ENCODE measurements at regions of chr12 and their contacts with region 1.

Region 1: DNA sequence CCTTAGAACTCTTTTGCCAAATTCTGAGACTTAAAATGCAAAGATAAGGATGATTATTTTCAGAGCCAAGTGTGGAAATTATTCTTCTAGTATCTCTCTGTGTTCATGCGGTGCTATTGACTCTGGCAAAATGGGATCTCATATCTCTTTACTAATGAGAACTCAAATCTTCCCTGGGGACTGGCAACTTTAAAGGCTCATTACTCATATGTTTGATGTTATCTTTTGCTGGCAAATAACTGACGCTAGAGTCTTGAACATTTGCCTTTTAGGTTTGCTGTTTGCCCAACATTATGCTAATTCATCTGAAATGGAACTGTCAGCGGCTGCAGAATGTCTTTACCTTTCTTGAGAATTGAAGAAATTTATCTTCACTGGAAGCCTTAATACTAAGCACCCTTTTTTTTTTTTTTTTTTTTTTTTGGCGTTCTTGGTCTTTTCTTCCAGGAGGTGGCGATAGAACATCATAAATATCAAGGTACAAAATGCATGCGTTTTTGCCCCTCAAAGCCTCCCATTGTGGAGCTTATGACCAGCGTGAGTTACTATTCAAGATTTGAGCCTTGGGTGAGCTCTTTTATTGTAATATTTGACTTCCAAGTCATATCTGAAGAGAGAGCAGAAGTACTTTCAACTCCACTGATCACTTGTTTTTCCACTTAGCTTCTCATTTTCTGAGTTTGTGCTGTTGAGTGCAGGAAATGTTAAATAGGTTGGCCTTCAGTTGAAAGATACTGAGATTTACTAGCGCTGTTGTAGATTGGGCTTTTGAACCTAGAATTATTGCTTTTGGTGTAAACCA is 86.6 kb downstream of the CAND1 start:
- DNase-seq: peak; percentile 16
- ATAC-seq: peak; percentile 76
- H3K4me3 ChIP-seq: no peak overlapping the region
- H3K27ac ChIP-seq: no peak overlapping the region
- H3K4me1 ChIP-seq: no peaks in the 10 kb centered on the region
- H3K27me3 ChIP-seq: no peaks in the 10 kb centered on the region
- CTCF ChIP-seq: peak; percentile 42 to 58 (median 53); a peak in 5 of 6 replicates
- EP300 ChIP-seq: no peak
- POLR2A ChIP-seq: no peak
- RAD21 ChIP-seq: peak; percentile 78

Region 2: GRCh38 chr12:67344979-67345710 is 10.6 kb before region 1 on chr12:
- CTCF ChIA-PET with region 1: interaction called, 13 read pairs
- POLR2A ChIA-PET with region 1: no interaction called
- RAD21 ChIA-PET with region 1: interaction called, 7 read pairs
- SMC1A ChIA-PET with region 1: interaction called, 4 read pairs
- in situ Hi-C with region 1: no loop called
- intact Hi-C with region 1: no loop called
- DNase-seq: no peak
- ATAC-seq: no peak
- H3K4me3 ChIP-seq: no peak overlapping the region
- H3K27ac ChIP-seq: no peak overlapping the region
- H3K4me1 ChIP-seq: no peaks in the 10 kb centered on the region
- H3K27me3 ChIP-seq: no peaks in the 10 kb centered on the region
- CTCF ChIP-seq: no peak
- EP300 ChIP-seq: no peak
- POLR2A ChIP-seq: no peak
- RAD21 ChIP-seq: no peak

Region 3: DNA sequence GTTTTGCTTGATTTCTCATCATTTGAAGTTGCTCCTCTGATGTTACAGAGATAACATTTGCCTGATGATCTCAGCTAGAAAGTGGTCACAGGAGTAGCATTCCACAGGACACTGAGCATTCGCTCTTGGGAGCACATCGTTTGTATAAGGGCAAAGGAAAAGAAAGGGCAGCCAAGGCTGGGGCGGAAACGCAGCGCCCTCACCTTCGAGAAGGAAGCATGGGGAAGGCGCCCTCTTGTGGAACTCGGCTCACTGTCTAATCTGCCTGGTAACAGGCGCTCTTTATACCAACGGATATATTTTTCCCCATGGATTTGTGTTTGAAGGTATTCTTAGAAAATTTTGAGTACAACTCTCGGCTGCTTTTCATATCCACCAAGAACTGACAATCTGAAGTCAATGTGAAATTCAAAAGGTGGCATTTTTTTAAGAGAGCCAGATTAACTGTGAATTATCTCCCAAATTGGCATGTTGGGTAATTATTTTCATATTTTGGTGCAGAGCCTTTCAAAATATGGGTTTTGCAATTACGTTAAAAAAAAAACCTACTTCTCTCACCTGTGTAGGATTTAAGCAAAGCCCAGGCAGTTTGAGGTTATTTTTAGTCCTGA is 86.1 kb after region 1 on chr12:
- CTCF ChIA-PET with region 1: interaction called, 46 read pairs
- POLR2A ChIA-PET with region 1: no interaction called
- RAD21 ChIA-PET with region 1: interaction called, 9 read pairs
- SMC1A ChIA-PET with region 1: interaction called, 21 read pairs
- in situ Hi-C with region 1: no loop called
- intact Hi-C with region 1: loop called (anchors 2 kb)
- DNase-seq: no peak
- ATAC-seq: peak; percentile 98
- H3K4me3 ChIP-seq: no peak overlapping the region
- H3K27ac ChIP-seq: no peak overlapping the region
- H3K4me1 ChIP-seq: peaks cover 8% of the 10 kb centered on the region; the same call in 1 of the 2 replicates
- H3K27me3 ChIP-seq: no peaks in the 10 kb centered on the region; a peak in 1 of 4 replicates
- CTCF ChIP-seq: peak; percentile 68 to 82 (median 76)
- EP300 ChIP-seq: no peak
- POLR2A ChIP-seq: no peak
- RAD21 ChIP-seq: peak; percentile 77

Region 4: DNA sequence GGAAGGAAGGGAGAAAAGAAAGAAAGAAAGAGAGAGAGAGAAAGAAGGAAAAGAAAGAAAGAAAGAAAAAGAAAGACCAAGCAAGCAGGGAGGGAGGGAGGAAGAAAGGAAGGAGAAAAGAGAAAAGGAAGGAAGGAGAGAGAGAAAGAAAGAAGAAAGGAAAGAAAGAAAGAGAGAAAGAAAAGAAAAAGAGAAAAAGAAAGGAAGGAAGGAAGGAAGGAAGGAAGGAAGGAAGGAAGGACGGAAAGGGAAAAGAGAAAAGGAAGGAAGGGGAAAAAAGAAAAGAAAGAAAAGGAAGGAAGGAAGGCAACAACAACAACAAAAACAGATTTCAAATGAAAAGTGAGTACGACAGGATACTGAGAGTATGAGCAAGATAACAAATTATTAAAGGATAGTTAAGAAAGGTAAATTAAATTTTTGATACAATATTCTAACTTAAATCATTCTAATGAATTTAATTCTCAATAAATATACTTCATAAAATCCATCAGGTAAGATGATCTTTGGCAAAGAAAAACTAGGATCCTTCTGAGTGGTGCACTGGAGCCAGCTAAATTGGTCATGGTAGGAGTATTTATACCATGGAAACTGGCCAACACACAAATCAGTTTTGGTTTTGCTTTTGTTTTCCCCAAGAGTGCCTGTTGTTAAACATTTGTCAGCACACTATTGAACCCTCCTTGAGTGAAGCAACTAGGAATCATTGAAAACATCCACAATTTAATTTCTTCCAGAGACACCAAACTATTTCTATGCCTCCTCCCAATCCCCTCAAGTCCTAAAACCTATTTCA is 236.6 kb after region 1 on chr12:
- CTCF ChIA-PET with region 1: no interaction called
- POLR2A ChIA-PET with region 1: no interaction called
- RAD21 ChIA-PET with region 1: no interaction called
- SMC1A ChIA-PET with region 1: no interaction called
- in situ Hi-C with region 1: no loop called
- intact Hi-C with region 1: no loop called
- DNase-seq: peak; percentile 45
- ATAC-seq: peak; percentile 91
- H3K4me3 ChIP-seq: peak overlapping the region; percentile 30; the same call in 1 of the 2 replicates
- H3K27ac ChIP-seq: no peak overlapping the region
- H3K4me1 ChIP-seq: no peaks in the 10 kb centered on the region
- H3K27me3 ChIP-seq: no peaks in the 10 kb centered on the region
- CTCF ChIP-seq: no peak
- EP300 ChIP-seq: no peak
- POLR2A ChIP-seq: no peak
- RAD21 ChIP-seq: no peak

Region 5: GRCh38 chr12:67648521-67649260 is 292.9 kb after region 1 on chr12 and contains the start of gene DYRK2:
- CTCF ChIA-PET with region 1: no interaction called
- POLR2A ChIA-PET with region 1: no interaction called
- RAD21 ChIA-PET with region 1: no interaction called
- SMC1A ChIA-PET with region 1: no interaction called
- in situ Hi-C with region 1: no loop called
- intact Hi-C with region 1: loop called (anchors 10 kb)
- DNase-seq: no peak
- ATAC-seq: peak; percentile 56
- H3K4me3 ChIP-seq: peak within 1 kb of the TSS; percentile 100
- H3K27ac ChIP-seq: peak within 1 kb of the TSS; percentile 70
- H3K4me1 ChIP-seq: peaks cover 6% of the 10 kb centered on the region
- H3K27me3 ChIP-seq: no peaks in the 10 kb centered on the region
- CTCF ChIP-seq: 0 out of 6 replicates have a peak, but pooled peaks of 1 of the 3 experiments have one; percentile 3
- EP300 ChIP-seq: no peak
- POLR2A ChIP-seq: peak; percentile 94
- RAD21 ChIP-seq: no peak
- polyA plus RNA-seq, gene DYRK2: 3.1 to 3.2 TPM

Region 6: DNA sequence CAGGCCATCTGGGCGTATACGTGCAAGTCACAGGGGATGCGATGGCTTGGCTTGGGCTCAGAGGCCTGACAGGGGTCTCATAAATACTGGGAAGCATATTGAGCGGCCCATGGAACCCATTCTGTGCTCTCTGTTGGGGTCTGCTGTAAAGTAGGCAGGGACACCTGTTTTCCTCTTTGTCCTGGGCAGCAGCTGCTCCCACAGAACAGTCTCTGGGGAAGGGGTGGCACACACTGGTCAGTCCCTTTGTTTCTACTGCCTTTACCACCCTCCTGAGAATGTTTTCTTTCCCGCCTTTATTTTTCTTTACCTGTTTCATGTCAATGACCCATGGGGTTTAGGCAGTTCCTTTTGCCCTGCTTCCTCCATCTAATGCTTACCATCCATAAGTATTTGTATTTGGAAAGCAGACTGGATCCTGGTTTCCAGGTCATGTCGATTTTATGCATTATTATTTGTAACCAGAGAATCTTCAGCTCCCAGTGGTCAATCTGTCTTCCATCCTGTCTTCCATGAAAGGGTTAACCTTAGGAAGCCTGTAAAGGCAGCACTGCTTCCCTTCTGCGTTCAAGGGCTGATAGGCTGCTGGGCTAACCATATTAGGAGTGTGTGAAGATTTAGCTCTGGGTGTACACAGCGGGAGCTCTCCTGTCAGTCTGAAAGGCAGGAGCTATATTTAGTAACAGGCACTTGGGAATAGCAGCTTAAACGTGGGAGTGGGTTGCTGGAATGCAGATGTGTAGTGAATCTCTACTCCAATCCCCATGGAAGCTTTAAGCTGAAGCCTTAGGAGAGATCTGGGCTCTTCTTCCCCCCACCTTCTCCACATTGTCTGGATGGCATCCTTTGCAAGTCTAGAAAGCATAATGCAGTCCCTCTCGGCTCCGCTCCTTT is 416.7 kb after region 1 on chr12:
- CTCF ChIA-PET with region 1: no interaction called
- POLR2A ChIA-PET with region 1: no interaction called
- RAD21 ChIA-PET with region 1: no interaction called
- SMC1A ChIA-PET with region 1: no interaction called
- in situ Hi-C with region 1: no loop called
- intact Hi-C with region 1: no loop called
- DNase-seq: no peak
- ATAC-seq: no peak
- H3K4me3 ChIP-seq: no peak overlapping the region
- H3K27ac ChIP-seq: no peak overlapping the region
- H3K4me1 ChIP-seq: no peaks in the 10 kb centered on the region
- H3K27me3 ChIP-seq: no peaks in the 10 kb centered on the region
- CTCF ChIP-seq: no peak
- EP300 ChIP-seq: no peak
- POLR2A ChIP-seq: no peak
- RAD21 ChIP-seq: no peak

Measured in GM12878 (cell line).